ENCODE measurements at regions of chr18 and their contacts with region 1.

Region 1: DNA sequence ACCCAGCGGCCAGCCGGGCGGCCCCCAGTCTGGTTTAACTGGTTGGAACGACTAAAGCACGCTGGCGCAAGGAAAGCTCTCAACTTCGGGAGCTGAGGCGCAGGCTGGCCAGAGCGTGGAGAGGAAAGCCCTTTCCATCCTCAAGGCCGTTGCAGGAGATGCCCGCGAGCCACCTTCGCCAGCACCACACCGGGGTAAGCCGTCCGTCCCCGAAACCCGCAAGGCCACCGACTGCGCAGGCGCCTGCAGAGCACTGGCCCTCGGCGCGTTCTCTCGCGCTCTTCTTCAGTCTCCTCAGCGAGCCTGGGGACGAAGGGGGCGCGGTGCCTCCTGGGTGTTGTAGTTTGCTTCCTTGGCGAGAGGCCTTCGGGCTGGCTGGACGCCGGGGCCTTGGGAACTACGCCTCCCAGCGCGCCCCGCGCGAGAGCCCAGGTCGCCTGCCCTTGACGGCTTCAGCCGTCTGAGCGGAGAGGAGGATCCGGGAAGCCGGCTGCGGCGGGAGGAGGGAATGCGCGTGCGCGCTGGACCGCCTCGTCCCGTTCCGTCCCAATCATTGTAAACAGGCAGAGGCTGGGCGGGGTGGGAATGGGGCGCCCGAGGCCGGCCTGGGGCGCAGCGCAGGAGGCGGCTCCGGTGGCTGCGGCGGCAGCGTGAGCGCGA is at the start of gene RALBP1:
- DNase-seq: peak; percentile 100
- ATAC-seq: peak; percentile 97 to 99
- total RNA-seq, gene RALBP1: 41.2 to 42.1 TPM

Region 2: GRCh38 chr18:9260388-9261380 is 214.4 kb before region 1 on chr18:
- intact Hi-C with region 1: no loop called
- DNase-seq: no peak
- ATAC-seq: no peak

Region 3: DNA sequence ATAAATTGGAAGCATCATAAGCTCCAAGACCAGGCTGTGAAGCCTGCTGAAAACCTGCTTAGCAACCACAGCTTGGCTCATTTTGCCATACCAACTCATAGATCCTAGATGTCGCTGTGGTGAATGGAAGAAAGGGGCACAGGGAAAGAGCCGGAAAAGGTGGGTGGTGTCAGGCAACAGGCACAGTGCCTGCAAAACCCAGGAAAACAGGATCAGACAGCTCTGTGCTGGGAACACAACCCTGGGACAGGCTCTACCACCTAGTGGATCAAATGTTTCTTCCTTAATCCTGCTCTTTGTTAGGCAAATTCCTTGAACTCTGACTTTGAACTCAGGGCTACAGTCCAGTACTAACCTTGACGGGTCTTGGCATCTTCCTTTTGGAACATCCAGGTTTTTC is 108.9 kb before region 1 on chr18:
- intact Hi-C with region 1: no loop called
- DNase-seq: peak; percentile 31
- ATAC-seq: peak; percentile 41 to 77

Region 4: GRCh38 chr18:9437021-9437437 is 38.1 kb before region 1 on chr18:
- intact Hi-C with region 1: no loop called
- DNase-seq: no peak
- ATAC-seq: peak in 1 of 2 donors; percentile 31

Region 5: GRCh38 chr18:9513971-9514512 is 38.9 kb after region 1 on chr18:
- intact Hi-C with region 1: loop called in 1 of 2 experiments (anchors 5 kb)
- DNase-seq: no peak
- ATAC-seq: no peak